ENCODE measurements at regions of chr3 and their contacts with region 1.

Region 1: DNA sequence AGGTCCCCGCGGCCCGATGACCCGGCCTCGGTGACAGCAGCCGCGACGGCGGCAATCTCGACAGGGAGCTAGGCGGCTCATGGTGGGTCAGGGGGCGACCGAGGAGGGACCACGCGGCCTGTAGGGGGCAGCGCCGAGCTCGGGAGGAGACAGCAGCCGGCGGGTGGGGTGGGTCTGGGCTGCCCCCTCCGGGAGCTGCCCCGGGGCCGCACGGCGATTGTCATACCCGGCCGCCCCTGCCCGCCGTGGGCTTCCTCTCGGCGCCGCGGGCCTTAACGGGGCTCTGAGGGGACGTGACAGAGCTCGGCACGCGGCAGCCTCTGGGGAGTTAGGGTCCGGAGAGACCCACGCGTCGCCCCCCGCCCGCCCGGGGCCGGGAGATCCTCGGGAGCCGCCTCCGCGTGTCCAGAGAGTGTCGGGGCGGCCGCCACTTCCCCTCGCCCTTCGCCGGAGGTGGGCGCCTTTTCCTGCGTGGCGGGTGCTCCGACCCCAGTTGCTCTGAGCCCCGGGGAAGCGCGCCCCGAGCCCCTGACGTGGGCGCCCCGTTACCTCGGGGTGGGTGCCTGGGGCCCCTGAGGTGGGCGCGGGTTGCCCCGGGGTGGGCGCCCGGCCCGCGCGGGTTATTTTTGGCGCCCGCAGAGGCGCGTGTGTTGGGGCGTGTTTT is 539 bp upstream of the PLCL2 start:
- DNase-seq: peak; percentile 46 to 82 (median 73)
- ATAC-seq: peak; percentile 49
- H3K4me3 ChIP-seq: peak overlapping the region; percentile 56 to 93
- H3K4me3 Mint-ChIP-seq: peak overlapping the region; percentile 95
- H3K27ac ChIP-seq: peak overlapping the region; percentile 62 to 70
- H3K27ac Mint-ChIP-seq: peak overlapping the region; percentile 97
- H3K4me1 ChIP-seq: peaks cover 16% of the 10 kb centered on the region
- H3K4me1 Mint-ChIP-seq: peaks cover 33% of the 10 kb centered on the region
- H3K27me3 ChIP-seq: no peaks in the 10 kb centered on the region
- H3K27me3 Mint-ChIP-seq: no peaks in the 10 kb centered on the region
- CTCF ChIP-seq: peak; percentile 24

Region 2: GRCh38 chr3:16309558-16309957 is 574.7 kb before region 1 on chr3:
- CTCF ChIA-PET with region 1: no interaction called
- POLR2A ChIA-PET with region 1: no interaction called
- intact Hi-C with region 1: loop called in 1 of 2 experiments (anchors 10 kb)
- DNase-seq: peak in 7 of 9 experiments; percentile 34 to 88 (median 58)
- ATAC-seq: peak; percentile 73
- H3K4me3 ChIP-seq: no peak overlapping the region
- H3K4me3 Mint-ChIP-seq: peak overlapping the region; percentile 72
- H3K27ac ChIP-seq: peak overlapping the region; percentile 11 to 69
- H3K27ac Mint-ChIP-seq: peak overlapping the region; percentile 97
- H3K4me1 ChIP-seq: peaks cover 94% of the 10 kb centered on the region
- H3K4me1 Mint-ChIP-seq: peaks cover 92% of the 10 kb centered on the region
- H3K27me3 ChIP-seq: no peaks in the 10 kb centered on the region
- H3K27me3 Mint-ChIP-seq: no peaks in the 10 kb centered on the region
- CTCF ChIP-seq: no peak

Region 3: GRCh38 chr3:16871915-16872842 is 12.0 kb before region 1 on chr3:
- CTCF ChIA-PET with region 1: interaction called, 25 read pairs
- POLR2A ChIA-PET with region 1: interaction called, 4 read pairs
- intact Hi-C with region 1: no loop called
- DNase-seq: no peak
- ATAC-seq: no peak
- H3K4me3 ChIP-seq: no peak overlapping the region
- H3K4me3 Mint-ChIP-seq: no peak overlapping the region
- H3K27ac ChIP-seq: no peak overlapping the region
- H3K27ac Mint-ChIP-seq: no peak overlapping the region
- H3K4me1 ChIP-seq: no peaks in the 10 kb centered on the region
- H3K4me1 Mint-ChIP-seq: peaks cover 1% of the 10 kb centered on the region
- H3K27me3 ChIP-seq: no peaks in the 10 kb centered on the region
- H3K27me3 Mint-ChIP-seq: no peaks in the 10 kb centered on the region
- CTCF ChIP-seq: no peak

Region 4: GRCh38 chr3:16928386-16929132 is 44.3 kb after region 1 on chr3:
- CTCF ChIA-PET with region 1: no interaction called
- POLR2A ChIA-PET with region 1: no interaction called
- intact Hi-C with region 1: loop called (anchors 5 kb)
- DNase-seq: no peak
- ATAC-seq: no peak
- H3K4me3 ChIP-seq: no peak overlapping the region
- H3K4me3 Mint-ChIP-seq: no peak overlapping the region
- H3K27ac ChIP-seq: no peak overlapping the region
- H3K27ac Mint-ChIP-seq: peak overlapping the region; percentile 42
- H3K4me1 ChIP-seq: peaks cover 38% of the 10 kb centered on the region
- H3K4me1 Mint-ChIP-seq: peaks cover 83% of the 10 kb centered on the region
- H3K27me3 ChIP-seq: no peaks in the 10 kb centered on the region
- H3K27me3 Mint-ChIP-seq: no peaks in the 10 kb centered on the region
- CTCF ChIP-seq: no peak

Region 5: DNA sequence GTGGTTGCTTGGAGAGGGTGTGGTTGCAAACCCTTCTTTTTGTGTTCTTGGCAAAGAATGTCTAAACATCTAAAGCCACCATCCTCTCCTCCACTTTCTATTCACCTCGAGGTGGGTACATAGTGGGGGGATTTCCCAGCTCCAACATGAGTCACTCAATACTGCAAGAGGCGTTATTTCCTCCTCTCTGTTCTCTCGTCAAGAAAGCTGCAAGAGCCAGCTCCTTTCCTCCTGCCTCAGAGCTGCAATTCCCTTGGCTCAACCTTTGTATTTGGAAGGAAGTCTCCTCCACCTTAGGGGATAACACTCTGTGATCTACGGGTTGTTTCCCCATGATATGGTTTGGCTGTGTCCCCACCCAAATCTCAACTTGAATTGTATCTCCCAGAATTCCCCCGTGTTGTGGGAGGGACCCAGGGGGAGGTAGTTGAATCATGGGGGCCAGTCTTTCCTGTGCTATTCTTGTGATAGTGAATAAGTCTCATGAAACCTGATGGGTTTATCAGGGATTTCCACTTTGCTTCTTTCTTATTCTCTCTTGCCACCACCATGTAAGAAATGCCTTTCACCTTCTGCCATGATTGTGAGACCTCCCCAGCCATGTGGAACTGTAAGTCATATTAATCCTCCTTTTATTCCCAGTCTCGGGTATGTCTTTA is 138.9 kb after region 1 on chr3:
- CTCF ChIA-PET with region 1: interaction called, 6 read pairs
- POLR2A ChIA-PET with region 1: interaction called, 3 read pairs
- intact Hi-C with region 1: loop called (anchors 2 to 5 kb)
- DNase-seq: peak in 8 of 9 experiments; percentile 29 to 88 (median 60)
- ATAC-seq: peak; percentile 95
- H3K4me3 ChIP-seq: no peak overlapping the region
- H3K4me3 Mint-ChIP-seq: peak overlapping the region; percentile 55
- H3K27ac ChIP-seq: peak overlapping the region in 1 of 2 experiments; percentile 51
- H3K27ac Mint-ChIP-seq: peak overlapping the region; percentile 90
- H3K4me1 ChIP-seq: peaks cover 30% of the 10 kb centered on the region
- H3K4me1 Mint-ChIP-seq: peaks cover 70% of the 10 kb centered on the region
- H3K27me3 ChIP-seq: no peaks in the 10 kb centered on the region
- H3K27me3 Mint-ChIP-seq: no peaks in the 10 kb centered on the region
- CTCF ChIP-seq: no peak

Region 6: DNA sequence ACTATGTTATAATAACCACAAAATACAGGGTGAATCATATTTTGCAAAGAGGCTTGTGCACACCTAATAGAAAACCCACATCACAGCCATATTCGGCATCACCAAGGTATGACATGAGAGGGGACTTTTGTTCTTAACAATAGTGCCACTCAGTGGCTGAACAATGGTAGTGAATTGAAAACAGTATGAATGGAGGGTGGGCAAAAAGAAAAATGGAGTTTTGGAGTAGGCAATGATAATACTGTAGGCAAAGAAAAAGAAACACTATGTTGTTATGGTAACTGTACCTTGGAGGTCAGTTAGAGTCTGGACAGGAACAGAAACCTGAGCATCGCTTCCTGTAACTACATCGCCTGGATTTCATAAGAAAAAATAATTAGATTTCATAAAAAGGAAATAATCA is 349.2 kb after region 1 on chr3:
- CTCF ChIA-PET with region 1: interaction called, 5 read pairs
- POLR2A ChIA-PET with region 1: no interaction called
- intact Hi-C with region 1: loop called (anchors 1 to 5 kb)
- DNase-seq: peak in 7 of 9 experiments; percentile 7 to 79 (median 35)
- ATAC-seq: peak; percentile 99
- H3K4me3 ChIP-seq: no peak overlapping the region
- H3K4me3 Mint-ChIP-seq: no peak overlapping the region
- H3K27ac ChIP-seq: no peak overlapping the region
- H3K27ac Mint-ChIP-seq: peak overlapping the region; percentile 3
- H3K4me1 ChIP-seq: peaks cover 20% of the 10 kb centered on the region
- H3K4me1 Mint-ChIP-seq: peaks cover 24% of the 10 kb centered on the region
- H3K27me3 ChIP-seq: no peaks in the 10 kb centered on the region
- H3K27me3 Mint-ChIP-seq: no peaks in the 10 kb centered on the region
- CTCF ChIP-seq: peak; percentile 84

Measured in CD8-positive, alpha-beta T cell (primary cell).